ENCODE measurements at regions of chr9 and their contacts with region 1.

Region 1: GRCh38 chr9:111301195-111301594 is 28.8 kb downstream of the OR2K2 start:
- DNase-seq: no peak

Region 2: GRCh38 chr9:110638381-110638954 is 662.7 kb before region 1 on chr9:
- intact Hi-C with region 1: loop called (anchors 5 kb)
- DNase-seq: no peak

Region 3: GRCh38 chr9:111613441-111614039 is 312.3 kb after region 1 on chr9:
- intact Hi-C with region 1: no loop called
- DNase-seq: no peak